Lower lobe of right lung (tissue), 2 donors: ENCODE measurements at regions of chr6 and their contacts with region 1.

Region 1: DNA sequence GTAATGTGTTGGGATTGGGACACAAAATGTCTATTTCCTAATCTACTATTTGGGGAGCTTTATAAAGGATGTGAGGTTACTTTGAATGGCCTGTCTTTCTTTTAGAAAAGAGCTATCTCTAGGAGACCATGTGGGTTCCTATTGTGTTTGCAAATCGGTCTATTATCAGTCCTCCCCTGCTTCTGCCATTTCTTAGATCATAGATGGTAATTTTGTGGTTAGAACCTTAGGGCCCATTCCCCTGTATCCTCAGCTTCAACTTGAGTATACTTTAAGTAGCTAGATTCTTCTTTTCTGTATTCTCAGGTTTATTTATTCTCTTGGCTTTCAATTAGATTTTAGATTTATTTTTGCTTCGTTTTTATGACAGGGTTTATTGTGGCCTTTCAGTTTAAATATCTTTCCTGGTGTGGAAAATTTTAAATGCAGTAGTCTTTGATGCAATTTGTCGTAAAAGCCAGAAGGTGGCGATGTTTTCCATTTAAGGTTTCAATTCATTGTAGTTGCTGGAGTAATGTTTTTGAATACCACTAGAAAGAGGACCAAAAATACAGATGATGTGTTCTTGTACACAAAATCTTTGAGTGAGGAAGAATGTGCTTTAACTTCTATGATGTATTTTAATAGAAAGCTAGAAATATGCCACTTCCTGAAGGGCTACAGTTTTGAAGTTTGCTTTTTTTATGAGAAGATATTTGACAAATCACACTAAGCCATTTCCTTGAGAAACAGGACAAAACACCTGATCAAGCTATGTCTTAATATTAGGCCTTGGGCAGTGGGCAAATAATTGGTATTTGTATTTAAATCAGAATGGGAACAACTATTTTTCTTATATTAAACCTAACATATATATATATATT is 20.3 kb downstream of the TBPL1 start:
- DNase-seq: no peak
- ATAC-seq: peak in 1 of 2 donors; percentile 64
- H3K4me3 ChIP-seq: no peak overlapping the region
- H3K27ac ChIP-seq: no peak overlapping the region
- H3K4me1 ChIP-seq: peaks cover 23% of the 10 kb centered on the region
- H3K27me3 ChIP-seq: no peaks in the 10 kb centered on the region
- CTCF ChIP-seq: peak; percentile 72

Region 2: GRCh38 chr6:134058622-134059366 is 85.5 kb after region 1 on chr6:
- intact Hi-C with region 1: loop called (anchors 10 kb)
- DNase-seq: no peak
- ATAC-seq: no peak
- H3K4me3 ChIP-seq: no peak overlapping the region
- H3K27ac ChIP-seq: no peak overlapping the region
- H3K4me1 ChIP-seq: no peaks in the 10 kb centered on the region
- H3K27me3 ChIP-seq: no peaks in the 10 kb centered on the region
- CTCF ChIP-seq: no peak

Region 3: GRCh38 chr6:134774201-134774638 is 800.9 kb after region 1 on chr6:
- intact Hi-C with region 1: no loop called
- DNase-seq: no peak
- ATAC-seq: no peak
- H3K4me3 ChIP-seq: no peak overlapping the region
- H3K27ac ChIP-seq: no peak overlapping the region
- H3K4me1 ChIP-seq: no peaks in the 10 kb centered on the region
- H3K27me3 ChIP-seq: no peaks in the 10 kb centered on the region
- CTCF ChIP-seq: no peak